ENCODE measurements at regions of chr20 and their contacts with region 1.

Region 1: DNA sequence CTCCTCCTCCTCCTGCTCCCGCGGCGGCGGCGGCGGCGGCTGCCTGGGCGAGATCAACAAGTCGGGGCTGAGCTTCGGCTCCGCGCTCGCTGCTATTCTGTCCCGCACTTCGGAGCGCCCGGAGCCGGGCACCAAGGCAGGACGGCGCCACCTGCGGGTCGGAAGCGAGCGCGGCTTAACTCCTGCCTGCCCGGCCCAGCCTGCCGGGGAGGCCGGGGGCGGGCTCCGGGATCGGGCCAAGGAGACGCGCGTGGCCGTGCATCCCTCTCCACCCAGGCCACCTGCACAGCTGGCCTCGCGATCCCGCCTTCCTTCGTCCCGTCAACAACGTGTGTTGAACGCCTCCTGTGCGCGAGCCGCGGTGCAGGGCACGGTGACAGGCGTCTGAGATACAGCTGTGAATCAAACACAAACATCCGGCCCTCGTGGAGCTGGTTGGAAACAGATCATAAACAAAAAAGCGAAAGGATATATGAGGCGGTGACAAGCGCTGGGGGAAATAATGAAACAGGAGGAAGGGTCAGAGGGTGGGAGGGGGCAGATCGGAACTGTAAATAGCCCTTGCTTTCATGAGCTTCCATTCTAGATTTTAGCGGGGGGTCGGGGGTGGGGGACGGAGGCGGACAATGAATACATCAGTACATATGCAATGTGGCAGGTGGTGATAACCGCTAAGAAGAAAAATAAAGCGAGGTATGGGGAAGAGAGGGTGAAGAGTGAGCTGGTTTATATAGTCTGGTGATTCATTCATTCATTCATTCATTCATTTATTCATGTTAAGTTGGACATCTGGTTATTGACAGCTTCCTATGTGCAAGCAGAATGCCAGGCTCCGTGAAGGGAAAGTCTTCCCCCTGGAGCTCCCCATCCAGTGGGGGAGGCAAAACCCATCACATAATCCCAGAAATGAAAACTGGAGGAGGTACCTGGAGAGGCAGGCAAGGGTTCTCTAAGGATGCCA is 2.0 kb upstream of the KCNB1 start:
- DNase-seq: peak; percentile 90
- ATAC-seq: peak; percentile 78
- H3K4me3 Mint-ChIP-seq: peak overlapping the region; percentile 84
- H3K27ac Mint-ChIP-seq: no peak overlapping the region
- H3K4me1 Mint-ChIP-seq: no peaks in the 10 kb centered on the region; the same call in 1 of the 2 replicates
- H3K27me3 Mint-ChIP-seq: peaks cover 52% of the 10 kb centered on the region
- CTCF ChIP-seq: peak; percentile 65

Region 2: DNA sequence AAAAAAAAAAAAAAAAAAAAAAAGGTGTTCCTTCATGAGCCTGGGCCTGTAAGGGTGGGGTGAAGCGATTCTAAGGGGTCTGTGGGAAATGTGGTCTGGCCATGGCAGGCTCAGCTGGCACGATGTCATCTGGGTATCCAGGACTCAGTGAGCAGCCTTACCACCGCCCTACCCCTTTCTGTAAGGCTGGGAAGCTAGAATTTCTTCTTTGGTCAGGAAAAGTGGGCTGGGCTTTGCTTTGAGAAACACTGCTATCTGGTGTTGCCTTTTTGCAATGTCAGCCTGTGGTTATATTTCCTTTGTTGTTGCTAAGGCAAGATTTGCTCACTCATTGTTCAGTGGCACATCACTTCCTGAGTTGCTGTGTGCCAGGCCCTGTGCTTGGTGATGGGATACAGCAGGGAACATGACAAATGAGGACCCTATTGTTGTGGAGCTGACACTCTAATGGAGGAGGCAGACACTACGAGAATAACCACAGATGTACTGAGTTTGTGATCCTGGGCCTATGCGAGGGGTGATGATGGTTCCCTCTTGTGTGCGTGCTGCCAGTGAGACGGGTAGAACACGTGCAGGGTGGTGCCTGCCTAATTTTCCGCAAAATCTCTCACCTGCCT is 160.7 kb before region 1 on chr20:
- CTCF ChIA-PET with region 1: interaction called, 31 read pairs
- POLR2A ChIA-PET with region 1: no interaction called
- DNase-seq: no peak
- ATAC-seq: peak; percentile 25
- H3K4me3 Mint-ChIP-seq: no peak overlapping the region
- H3K27ac Mint-ChIP-seq: no peak overlapping the region
- H3K4me1 Mint-ChIP-seq: peaks cover 32% of the 10 kb centered on the region
- H3K27me3 Mint-ChIP-seq: peaks cover 21% of the 10 kb centered on the region
- CTCF ChIP-seq: no peak

Region 3: GRCh38 chr20:49338061-49338460 is 146.4 kb before region 1 on chr20:
- CTCF ChIA-PET with region 1: interaction called, 117 read pairs
- POLR2A ChIA-PET with region 1: interaction called, 3 read pairs
- DNase-seq: no peak
- ATAC-seq: no peak
- H3K4me3 Mint-ChIP-seq: no peak overlapping the region
- H3K27ac Mint-ChIP-seq: no peak overlapping the region
- H3K4me1 Mint-ChIP-seq: no peaks in the 10 kb centered on the region
- H3K27me3 Mint-ChIP-seq: 0 out of 2 replicates have a peak, but pooled peaks cover under 1% of the 10 kb centered on the region
- CTCF ChIP-seq: no peak

Region 4: GRCh38 chr20:49384437-49385088 is 99.9 kb before region 1 on chr20:
- CTCF ChIA-PET with region 1: interaction called, 121 read pairs
- POLR2A ChIA-PET with region 1: interaction called, 5 read pairs
- DNase-seq: peak; percentile 97
- ATAC-seq: peak; percentile 79
- H3K4me3 Mint-ChIP-seq: no peak overlapping the region
- H3K27ac Mint-ChIP-seq: 0 out of 2 replicates have a peak overlapping the region, but pooled peaks have one; percentile 1
- H3K4me1 Mint-ChIP-seq: peaks cover 29% of the 10 kb centered on the region
- H3K27me3 Mint-ChIP-seq: no peaks in the 10 kb centered on the region
- CTCF ChIP-seq: peak; percentile 91

Region 5: DNA sequence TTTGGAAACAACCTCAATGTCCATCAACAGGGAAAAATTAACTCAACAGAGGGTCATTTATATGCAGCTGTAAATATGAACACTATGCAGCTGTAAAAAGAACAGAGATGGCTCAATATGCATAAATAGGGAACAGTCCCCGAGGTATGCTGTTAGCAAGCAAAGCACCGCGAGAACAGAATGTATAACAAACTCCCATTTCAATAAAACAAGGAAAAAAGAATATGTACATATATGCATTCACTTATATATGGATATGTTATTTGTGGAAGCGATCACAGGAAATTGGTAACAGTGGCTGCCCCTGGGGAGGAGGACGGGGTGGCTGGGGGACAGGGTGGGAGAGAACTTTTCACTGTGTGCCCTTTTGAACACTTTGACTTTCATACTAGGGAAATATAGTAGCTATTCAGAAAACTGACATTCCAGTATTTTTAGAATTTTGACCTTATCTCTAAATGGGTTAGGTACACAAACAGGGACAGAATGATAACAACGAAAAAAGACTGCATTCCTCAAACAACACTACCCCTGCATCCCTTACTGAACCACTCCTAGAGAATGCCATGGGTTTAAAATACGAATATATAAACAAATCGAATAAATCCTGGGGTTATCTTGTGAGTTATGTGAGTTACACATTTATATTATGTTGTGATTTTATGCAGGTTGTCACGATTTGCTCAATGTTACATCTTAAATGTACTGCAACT is 66.5 kb before region 1 on chr20:
- CTCF ChIA-PET with region 1: interaction called, 13 read pairs
- POLR2A ChIA-PET with region 1: no interaction called
- DNase-seq: no peak
- ATAC-seq: no peak
- H3K4me3 Mint-ChIP-seq: no peak overlapping the region
- H3K27ac Mint-ChIP-seq: no peak overlapping the region
- H3K4me1 Mint-ChIP-seq: peaks cover 12% of the 10 kb centered on the region
- H3K27me3 Mint-ChIP-seq: no peaks in the 10 kb centered on the region
- CTCF ChIP-seq: no peak

Region 6: GRCh38 chr20:49446808-49447207 is 37.7 kb before region 1 on chr20:
- CTCF ChIA-PET with region 1: interaction called, 31 read pairs
- POLR2A ChIA-PET with region 1: no interaction called
- DNase-seq: peak; percentile 74
- ATAC-seq: peak; percentile 55
- H3K4me3 Mint-ChIP-seq: no peak overlapping the region
- H3K27ac Mint-ChIP-seq: no peak overlapping the region
- H3K4me1 Mint-ChIP-seq: peaks cover 57% of the 10 kb centered on the region
- H3K27me3 Mint-ChIP-seq: no peaks in the 10 kb centered on the region
- CTCF ChIP-seq: no peak

Region 7: GRCh38 chr20:49496553-49497397 is 12.3 kb after region 1 on chr20:
- CTCF ChIA-PET with region 1: interaction called, 32 read pairs
- POLR2A ChIA-PET with region 1: no interaction called
- DNase-seq: no peak
- ATAC-seq: peak; percentile 21; the same call in 1 of the 2 replicates
- H3K4me3 Mint-ChIP-seq: no peak overlapping the region
- H3K27ac Mint-ChIP-seq: no peak overlapping the region
- H3K4me1 Mint-ChIP-seq: peaks cover 9% of the 10 kb centered on the region
- H3K27me3 Mint-ChIP-seq: peaks cover 3% of the 10 kb centered on the region
- CTCF ChIP-seq: no peak